CD4-positive, alpha-beta T cell (primary cell): ENCODE measurements at regions of chr17 and their contacts with region 1.

Region 1: GRCh38 chr17:82418001-82418986 is at the starts of genes HEXD and OGFOD3:
- DNase-seq: peak; percentile 69 to 95 (median 83)
- ATAC-seq: peak; percentile 85
- H3K4me3 ChIP-seq: peak within 1 kb of the TSS; percentile 76
- H3K4me3 Mint-ChIP-seq: peak within 1 kb of the TSS; percentile 85
- H3K27ac ChIP-seq: peak within 1 kb of the TSS; percentile 35 to 50
- H3K27ac Mint-ChIP-seq: peak within 1 kb of the TSS; percentile 78
- H3K4me1 ChIP-seq: peaks cover 30% of the 10 kb centered on the region
- H3K4me1 Mint-ChIP-seq: peaks cover 32% of the 10 kb centered on the region
- H3K27me3 ChIP-seq: no peaks in the 10 kb centered on the region
- H3K27me3 Mint-ChIP-seq: no peaks in the 10 kb centered on the region
- CTCF ChIP-seq: no peak
- total RNA-seq, gene HEXD: 27.8 to 31.2 TPM
- total RNA-seq, gene OGFOD3: 12.9 to 13.7 TPM

Region 2: GRCh38 chr17:82225368-82226029 is 192.8 kb before region 1 on chr17:
- CTCF ChIA-PET with region 1: no interaction called
- POLR2A ChIA-PET with region 1: no interaction called
- intact Hi-C with region 1: no loop called
- DNase-seq: no peak
- ATAC-seq: no peak
- H3K4me3 ChIP-seq: no peak overlapping the region
- H3K4me3 Mint-ChIP-seq: no peak overlapping the region
- H3K27ac ChIP-seq: no peak overlapping the region
- H3K27ac Mint-ChIP-seq: no peak overlapping the region
- H3K4me1 ChIP-seq: peaks cover 32% of the 10 kb centered on the region
- H3K4me1 Mint-ChIP-seq: peaks cover 16% of the 10 kb centered on the region
- H3K27me3 ChIP-seq: no peaks in the 10 kb centered on the region
- H3K27me3 Mint-ChIP-seq: no peaks in the 10 kb centered on the region
- CTCF ChIP-seq: no peak

Region 3: GRCh38 chr17:82236142-82236981 is 181.9 kb before region 1 on chr17:
- CTCF ChIA-PET with region 1: interaction called, 3 read pairs
- POLR2A ChIA-PET with region 1: no interaction called
- intact Hi-C with region 1: loop called (anchors 2 to 5 kb)
- DNase-seq: peak; percentile 57 to 87 (median 66)
- ATAC-seq: peak; percentile 48
- H3K4me3 ChIP-seq: no peak overlapping the region
- H3K4me3 Mint-ChIP-seq: no peak overlapping the region
- H3K27ac ChIP-seq: peak overlapping the region in 1 of 2 donors; percentile 32
- H3K27ac Mint-ChIP-seq: peak overlapping the region; percentile 56
- H3K4me1 ChIP-seq: peaks cover 72% of the 10 kb centered on the region
- H3K4me1 Mint-ChIP-seq: peaks cover 40% of the 10 kb centered on the region
- H3K27me3 ChIP-seq: no peaks in the 10 kb centered on the region
- H3K27me3 Mint-ChIP-seq: no peaks in the 10 kb centered on the region
- CTCF ChIP-seq: peak; percentile 84

Region 4: DNA sequence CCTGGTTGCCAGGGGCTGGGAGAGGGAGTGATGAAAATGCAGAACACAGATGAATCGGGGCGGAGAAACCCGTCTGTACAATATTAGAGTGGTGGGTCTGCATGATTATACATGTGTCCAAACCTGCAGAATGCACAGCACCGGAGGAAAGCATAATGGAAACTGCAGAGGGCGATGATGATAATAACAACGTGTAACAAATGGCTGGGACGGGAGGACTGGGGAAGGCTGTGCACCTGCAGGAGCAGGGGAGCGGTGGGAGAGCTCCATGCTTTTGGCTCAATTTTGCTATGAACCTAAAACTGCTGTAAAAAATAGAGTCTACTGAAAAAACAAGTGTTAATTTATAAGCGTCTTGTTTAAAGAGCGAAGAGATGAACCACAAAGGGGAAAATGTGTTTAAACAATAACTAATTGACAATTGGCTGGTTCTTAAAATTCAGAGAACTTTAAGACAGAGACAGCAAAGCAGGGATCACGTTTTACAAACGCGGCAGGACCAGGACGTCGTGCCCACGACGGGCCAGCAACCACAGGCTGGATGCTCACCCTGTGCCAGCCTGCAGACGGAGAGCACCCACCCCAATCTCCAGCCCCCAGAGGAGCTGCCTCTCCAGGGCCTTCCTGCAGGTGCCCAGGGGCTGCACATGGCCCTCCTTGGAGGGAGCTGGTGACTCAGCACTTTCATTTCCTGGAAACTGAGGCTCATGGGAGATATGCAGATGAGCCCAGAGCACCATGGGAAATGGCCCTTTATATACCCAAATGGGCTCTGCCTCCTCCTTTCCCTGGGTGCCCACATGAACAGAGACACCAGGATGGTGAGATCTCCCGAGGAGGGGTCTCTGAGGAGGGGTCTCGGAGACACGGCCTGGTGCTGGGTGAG is 59.6 kb before region 1 on chr17 and contains the start of gene TEX19:
- CTCF ChIA-PET with region 1: no interaction called
- POLR2A ChIA-PET with region 1: no interaction called
- intact Hi-C with region 1: no loop called
- DNase-seq: peak in 1 of 14 experiments; percentile 22
- ATAC-seq: peak; percentile 34
- H3K4me3 ChIP-seq: no peak within 1 kb of the TSS
- H3K4me3 Mint-ChIP-seq: no peak within 1 kb of the TSS
- H3K27ac ChIP-seq: no peak within 1 kb of the TSS
- H3K27ac Mint-ChIP-seq: no peak within 1 kb of the TSS
- H3K4me1 ChIP-seq: peaks cover 6% of the 10 kb centered on the region
- H3K4me1 Mint-ChIP-seq: peaks cover 6% of the 10 kb centered on the region
- H3K27me3 ChIP-seq: peaks cover 4 to 8% of the 10 kb centered on the region in 2 experiments
- H3K27me3 Mint-ChIP-seq: peaks cover 12% of the 10 kb centered on the region
- CTCF ChIP-seq: no peak
- total RNA-seq, gene TEX19: not detected

Region 5: GRCh38 chr17:82450170-82451106 is 32.1 kb after region 1 on chr17 and contains the start of gene CYBC1:
- CTCF ChIA-PET with region 1: interaction called, 5 read pairs
- POLR2A ChIA-PET with region 1: interaction called, 9 read pairs
- intact Hi-C with region 1: loop called (anchors 1 to 5 kb)
- DNase-seq: peak; percentile 89 to 98 (median 96)
- ATAC-seq: peak; percentile 66
- H3K4me3 ChIP-seq: peak within 1 kb of the TSS; percentile 97
- H3K4me3 Mint-ChIP-seq: peak within 1 kb of the TSS; percentile 97
- H3K27ac ChIP-seq: peak within 1 kb of the TSS; percentile 90 to 96
- H3K27ac Mint-ChIP-seq: peak within 1 kb of the TSS; percentile 97
- H3K4me1 ChIP-seq: peaks cover 50% of the 10 kb centered on the region
- H3K4me1 Mint-ChIP-seq: peaks cover 48% of the 10 kb centered on the region
- H3K27me3 ChIP-seq: no peaks in the 10 kb centered on the region
- H3K27me3 Mint-ChIP-seq: no peaks in the 10 kb centered on the region
- CTCF ChIP-seq: no peak
- total RNA-seq, gene CYBC1: 60.2 to 62.4 TPM

Region 6: DNA sequence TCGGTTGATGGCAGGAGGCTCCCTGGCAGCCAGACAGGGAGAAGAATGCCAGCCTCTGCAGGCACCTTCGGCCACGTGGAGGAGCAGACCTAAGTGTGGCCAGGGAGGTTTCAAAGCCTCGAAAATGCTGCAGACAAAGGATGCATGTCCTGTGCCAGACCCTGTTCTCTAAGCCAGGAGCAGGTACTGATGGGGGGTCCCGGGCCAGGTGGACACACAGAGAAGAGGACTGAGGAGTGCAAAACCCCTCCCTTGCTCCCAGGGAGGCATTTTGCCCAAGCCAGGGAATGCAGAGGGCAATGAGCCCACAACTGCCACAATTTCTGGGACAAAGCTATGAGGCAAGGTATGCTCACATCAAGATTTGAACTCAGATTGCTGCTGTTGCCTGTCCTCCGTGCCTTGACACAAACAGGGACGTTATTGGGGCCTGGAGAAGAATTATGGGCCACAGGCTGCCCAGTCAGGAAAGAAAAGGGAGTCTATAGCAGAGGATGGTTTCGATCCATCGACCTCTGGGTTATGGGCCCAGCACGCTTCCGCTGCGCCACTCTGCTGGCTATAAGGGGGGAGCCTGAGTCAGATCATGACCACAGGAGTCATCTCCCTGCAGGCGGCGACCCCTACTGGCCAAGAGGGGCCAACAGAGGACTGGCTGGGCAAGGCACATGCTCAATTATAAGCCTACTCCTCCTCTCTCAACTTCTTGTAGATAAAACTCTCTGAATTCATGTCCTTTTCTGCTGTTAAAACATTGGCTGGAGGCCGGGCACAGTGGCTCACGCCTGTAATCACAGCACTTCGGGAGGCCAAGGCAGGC is 76.2 kb after region 1 on chr17:
- CTCF ChIA-PET with region 1: no interaction called
- POLR2A ChIA-PET with region 1: interaction called, 5 read pairs
- intact Hi-C with region 1: loop called in 1 of 2 experiments (anchors 2 kb)
- DNase-seq: peak; percentile 77 to 93 (median 85)
- ATAC-seq: peak; percentile 69
- H3K4me3 ChIP-seq: no peak overlapping the region
- H3K4me3 Mint-ChIP-seq: peak overlapping the region; percentile 91
- H3K27ac ChIP-seq: peak overlapping the region in 1 of 2 donors; percentile 14
- H3K27ac Mint-ChIP-seq: peak overlapping the region; percentile 92
- H3K4me1 ChIP-seq: peaks cover 38% of the 10 kb centered on the region
- H3K4me1 Mint-ChIP-seq: peaks cover 22% of the 10 kb centered on the region
- H3K27me3 ChIP-seq: no peaks in the 10 kb centered on the region
- H3K27me3 Mint-ChIP-seq: no peaks in the 10 kb centered on the region
- CTCF ChIP-seq: peak; percentile 58

Region 7: DNA sequence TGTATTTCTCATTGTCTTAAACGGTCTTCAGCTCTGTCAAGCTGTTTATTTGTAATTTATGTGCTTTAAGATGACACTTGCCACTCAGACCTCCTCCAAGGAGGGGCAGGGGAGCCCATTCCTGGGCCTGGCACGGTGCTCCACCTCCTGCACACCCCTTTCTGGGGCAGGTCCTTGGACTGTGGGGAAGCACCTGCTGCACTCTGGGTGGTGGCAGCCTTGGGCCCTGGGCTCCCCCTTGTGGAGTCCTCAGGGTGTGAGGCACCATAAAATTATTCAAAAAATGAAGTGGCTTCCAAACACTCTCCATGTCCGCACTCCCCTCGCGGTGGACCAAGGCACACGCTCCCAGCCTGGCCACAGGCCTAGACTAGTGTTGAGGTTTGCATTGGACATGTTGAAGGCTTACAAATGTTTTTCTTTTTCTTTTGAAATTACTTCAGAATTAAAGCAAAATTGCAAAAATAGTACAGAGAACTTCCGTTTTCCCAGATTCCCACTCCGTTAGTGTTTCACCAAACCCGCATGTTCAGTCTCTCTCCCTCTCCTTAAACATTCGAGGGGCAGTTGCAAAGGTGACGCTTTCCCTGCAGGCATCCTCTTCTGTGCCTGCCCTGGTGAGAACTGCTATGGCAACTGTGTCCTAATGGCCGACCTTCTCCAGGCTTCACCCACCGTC is 133.6 kb after region 1 on chr17:
- CTCF ChIA-PET with region 1: no interaction called
- POLR2A ChIA-PET with region 1: no interaction called
- intact Hi-C with region 1: loop called (anchors 1 to 10 kb)
- DNase-seq: peak; percentile 59 to 88 (median 76)
- ATAC-seq: peak; percentile 100
- H3K4me3 ChIP-seq: no peak overlapping the region
- H3K4me3 Mint-ChIP-seq: no peak overlapping the region
- H3K27ac ChIP-seq: no peak overlapping the region
- H3K27ac Mint-ChIP-seq: peak overlapping the region; percentile 56
- H3K4me1 ChIP-seq: peaks cover 24% of the 10 kb centered on the region
- H3K4me1 Mint-ChIP-seq: peaks cover 40% of the 10 kb centered on the region
- H3K27me3 ChIP-seq: no peaks in the 10 kb centered on the region
- H3K27me3 Mint-ChIP-seq: no peaks in the 10 kb centered on the region
- CTCF ChIP-seq: peak; percentile 77